ENCODE measurements at regions of chr2 and their contacts with region 1.

Region 1: GRCh38 chr2:25201265-25201664 is 32.9 kb upstream of the POMC start:
- DNase-seq: peak; percentile 5
- H3K4me3 Mint-ChIP-seq: no peak overlapping the region
- H3K27ac Mint-ChIP-seq: no peak overlapping the region
- H3K4me1 Mint-ChIP-seq: no peaks in the 10 kb centered on the region
- H3K27me3 Mint-ChIP-seq: peaks cover 15% of the 10 kb centered on the region
- CTCF ChIP-seq: no peak

Region 2: DNA sequence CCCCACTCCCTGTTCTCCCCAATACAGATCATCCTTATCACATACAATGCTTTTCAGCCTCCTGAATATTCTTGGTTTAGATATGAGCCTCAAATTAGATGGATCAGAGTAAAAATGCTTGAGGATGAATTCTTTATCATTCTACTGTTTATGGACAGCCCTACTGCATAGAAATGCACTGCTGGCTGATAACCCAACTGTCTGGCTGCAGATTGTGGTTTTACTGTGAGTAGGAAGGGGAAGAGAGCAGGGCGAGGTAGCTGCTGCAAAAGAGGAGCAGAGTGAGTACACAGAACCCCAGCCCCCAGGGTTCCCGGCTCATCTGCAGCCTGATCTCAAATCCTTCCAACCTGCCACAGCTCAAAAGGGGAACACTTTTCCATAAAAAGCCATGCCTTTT is 739.6 kb before region 1 on chr2:
- CTCF ChIA-PET with region 1: no interaction called
- POLR2A ChIA-PET with region 1: no interaction called
- intact Hi-C with region 1: no loop called
- DNase-seq: no peak
- H3K4me3 Mint-ChIP-seq: no peak overlapping the region
- H3K27ac Mint-ChIP-seq: no peak overlapping the region
- H3K4me1 Mint-ChIP-seq: peaks cover 3% of the 10 kb centered on the region
- H3K27me3 Mint-ChIP-seq: peaks cover 15% of the 10 kb centered on the region
- CTCF ChIP-seq: no peak

Region 3: GRCh38 chr2:24827321-24828237 is 373.7 kb before region 1 on chr2:
- CTCF ChIA-PET with region 1: interaction called, 9 read pairs
- POLR2A ChIA-PET with region 1: no interaction called
- intact Hi-C with region 1: loop called (anchors 5 kb)
- DNase-seq: peak; percentile 73
- H3K4me3 Mint-ChIP-seq: no peak overlapping the region
- H3K27ac Mint-ChIP-seq: no peak overlapping the region
- H3K4me1 Mint-ChIP-seq: no peaks in the 10 kb centered on the region
- H3K27me3 Mint-ChIP-seq: no peaks in the 10 kb centered on the region
- CTCF ChIP-seq: peak; percentile 58

Region 4: DNA sequence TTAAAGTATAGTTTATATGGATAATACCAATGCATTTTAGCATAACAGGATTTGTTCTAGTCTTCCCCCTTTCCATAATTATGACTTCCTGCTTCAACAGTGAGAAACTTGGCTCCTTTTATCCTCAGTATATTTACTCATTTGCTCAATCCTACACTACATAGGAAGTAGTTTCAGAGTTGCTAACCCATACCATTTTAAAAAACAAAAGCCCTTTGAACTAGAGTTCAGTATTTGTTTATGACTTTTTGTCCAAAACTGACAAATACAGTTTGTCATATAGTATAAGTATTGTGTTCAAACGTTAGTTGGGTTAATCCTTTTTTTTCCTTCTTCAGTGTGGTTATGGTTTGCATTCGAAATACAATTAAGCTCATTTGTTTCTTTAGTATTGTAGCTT is 223.6 kb before region 1 on chr2:
- CTCF ChIA-PET with region 1: interaction called, 16 read pairs
- POLR2A ChIA-PET with region 1: no interaction called
- intact Hi-C with region 1: loop called (anchors 1 kb)
- DNase-seq: no peak
- H3K4me3 Mint-ChIP-seq: no peak overlapping the region
- H3K27ac Mint-ChIP-seq: no peak overlapping the region
- H3K4me1 Mint-ChIP-seq: no peaks in the 10 kb centered on the region
- H3K27me3 Mint-ChIP-seq: no peaks in the 10 kb centered on the region
- CTCF ChIP-seq: no peak

Region 5: GRCh38 chr2:25165992-25166875 is 35.0 kb before region 1 on chr2:
- CTCF ChIA-PET with region 1: interaction called, 46 read pairs
- POLR2A ChIA-PET with region 1: no interaction called
- intact Hi-C with region 1: loop called (anchors 1 kb)
- DNase-seq: peak; percentile 8
- H3K4me3 Mint-ChIP-seq: no peak overlapping the region
- H3K27ac Mint-ChIP-seq: no peak overlapping the region
- H3K4me1 Mint-ChIP-seq: no peaks in the 10 kb centered on the region
- H3K27me3 Mint-ChIP-seq: peaks cover 55% of the 10 kb centered on the region
- CTCF ChIP-seq: no peak

Region 6: DNA sequence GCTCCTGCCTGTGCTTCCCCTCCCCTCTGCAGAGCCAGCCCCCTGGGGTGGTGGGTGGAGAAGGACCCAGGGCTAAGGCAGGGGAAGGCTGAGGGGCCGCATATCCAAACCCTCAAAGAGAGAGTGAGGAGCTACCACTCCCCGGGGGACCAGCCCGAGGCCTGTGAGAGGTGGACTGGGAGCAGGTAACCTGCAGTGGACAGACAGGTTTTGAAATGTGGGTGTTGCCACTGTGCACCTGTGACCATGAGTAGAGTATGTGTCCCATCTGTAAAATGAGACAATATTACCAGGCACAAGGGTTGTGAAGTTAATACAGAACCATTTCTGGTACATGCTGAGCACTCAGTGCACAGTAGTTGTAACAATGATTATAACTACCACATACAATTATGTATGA is 18.3 kb after region 1 on chr2:
- CTCF ChIA-PET with region 1: interaction called, 13 read pairs
- POLR2A ChIA-PET with region 1: interaction called, 3 read pairs
- intact Hi-C with region 1: no loop called
- DNase-seq: no peak
- H3K4me3 Mint-ChIP-seq: no peak overlapping the region
- H3K27ac Mint-ChIP-seq: no peak overlapping the region
- H3K4me1 Mint-ChIP-seq: no peaks in the 10 kb centered on the region
- H3K27me3 Mint-ChIP-seq: no peaks in the 10 kb centered on the region
- CTCF ChIP-seq: no peak